AG04450 (cell line): ENCODE measurements at regions of chr2 and their contacts with region 1.

Region 1: DNA sequence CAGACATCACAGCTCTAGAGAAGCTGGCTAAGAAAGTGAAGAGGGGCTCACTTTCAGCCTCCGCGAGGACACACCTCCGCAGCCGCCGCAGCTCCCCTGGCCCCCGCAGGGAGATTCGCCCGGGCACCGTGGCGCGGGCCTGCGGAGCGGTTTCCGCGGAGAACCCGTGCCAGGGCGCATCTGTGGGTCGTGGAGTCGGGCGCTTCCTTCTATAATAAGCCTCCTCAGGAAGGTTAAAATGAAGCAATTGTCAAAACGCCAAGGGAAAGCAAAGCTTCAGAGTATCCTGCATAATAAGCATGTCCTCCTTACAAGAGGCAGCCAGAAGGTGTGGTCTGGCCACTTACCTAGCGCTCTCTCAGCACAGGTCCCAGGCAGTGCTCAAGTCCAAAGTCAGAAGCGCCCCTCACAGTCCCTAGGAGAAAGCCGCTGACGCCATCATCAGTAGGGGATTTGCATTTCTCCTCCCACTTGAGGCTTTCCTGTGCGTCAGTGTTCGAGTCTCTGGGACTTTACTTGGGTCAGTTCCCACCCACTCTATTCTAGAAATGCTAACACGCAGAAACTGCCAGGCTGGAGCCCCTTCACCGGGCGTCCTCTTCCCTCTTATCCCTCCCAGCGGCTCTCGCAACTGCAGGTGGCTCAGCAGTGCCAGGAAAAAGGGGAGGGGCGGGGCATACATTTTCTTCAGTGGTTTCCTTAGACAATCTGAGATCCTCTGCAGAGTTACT is at the start of gene STAT4:
- DNase-seq: no peak
- H3K4me3 ChIP-seq: peak within 1 kb of the TSS; percentile 58
- H3K27ac ChIP-seq: no peak within 1 kb of the TSS
- H3K27me3 ChIP-seq: no peaks in the 10 kb centered on the region
- CTCF ChIP-seq: no peak
- polyA plus RNA-seq, gene STAT4: 0.88 and 1.3 TPM in 2 replicates

Region 2: DNA sequence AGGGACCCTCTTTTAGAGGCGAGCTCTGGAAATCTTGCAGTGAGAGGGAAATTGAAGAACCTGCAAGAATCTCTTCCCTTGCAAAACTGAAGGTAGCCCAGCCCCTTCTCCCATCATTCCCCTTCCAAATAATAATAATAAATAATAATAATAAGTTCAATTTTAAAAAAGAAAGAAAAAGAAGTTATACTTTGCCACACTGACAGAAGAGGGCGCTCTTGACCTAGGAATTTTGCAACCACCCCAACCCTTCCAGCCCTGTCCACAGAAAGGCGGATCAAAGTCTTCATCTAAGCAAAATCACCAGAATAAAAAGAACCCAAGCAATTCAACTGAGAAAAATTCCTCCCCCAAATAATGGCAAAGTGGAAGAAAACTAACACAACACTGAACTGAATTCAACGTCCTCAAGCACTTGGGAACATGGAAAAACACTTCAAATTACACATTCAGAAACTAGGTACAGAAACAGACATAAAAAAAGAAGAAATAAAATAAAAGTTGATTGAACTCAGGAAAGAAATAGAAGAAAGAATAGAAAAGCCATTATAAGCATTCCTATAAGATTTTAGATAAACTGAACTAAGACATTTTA is 369.1 kb before region 1 on chr2:
- CTCF ChIA-PET with region 1: interaction called, 12 read pairs
- POLR2A ChIA-PET with region 1: no interaction called
- DNase-seq: peak; percentile 47
- H3K4me3 ChIP-seq: no peak overlapping the region
- H3K27ac ChIP-seq: no peak overlapping the region
- H3K27me3 ChIP-seq: peaks cover 9% of the 10 kb centered on the region
- CTCF ChIP-seq: peak; percentile 59

Region 3: GRCh38 chr2:191066197-191066918 is 84.4 kb before region 1 on chr2:
- CTCF ChIA-PET with region 1: interaction called, 25 read pairs
- POLR2A ChIA-PET with region 1: no interaction called
- DNase-seq: no peak
- H3K4me3 ChIP-seq: no peak overlapping the region
- H3K27ac ChIP-seq: no peak overlapping the region
- H3K27me3 ChIP-seq: no peaks in the 10 kb centered on the region
- CTCF ChIP-seq: no peak

Region 4: GRCh38 chr2:191165176-191165643 is 14.4 kb after region 1 on chr2:
- CTCF ChIA-PET with region 1: interaction called, 28 read pairs
- POLR2A ChIA-PET with region 1: no interaction called
- DNase-seq: no peak
- H3K4me3 ChIP-seq: no peak overlapping the region
- H3K27ac ChIP-seq: no peak overlapping the region
- H3K27me3 ChIP-seq: no peaks in the 10 kb centered on the region
- CTCF ChIP-seq: peak; percentile 81

Region 5: GRCh38 chr2:191171708-191172355 is 21.1 kb after region 1 on chr2:
- CTCF ChIA-PET with region 1: interaction called, 28 read pairs
- POLR2A ChIA-PET with region 1: no interaction called
- DNase-seq: peak; percentile 81
- H3K4me3 ChIP-seq: no peak overlapping the region
- H3K27ac ChIP-seq: peak overlapping the region; percentile 81
- H3K27me3 ChIP-seq: no peaks in the 10 kb centered on the region
- CTCF ChIP-seq: no peak

Region 6: DNA sequence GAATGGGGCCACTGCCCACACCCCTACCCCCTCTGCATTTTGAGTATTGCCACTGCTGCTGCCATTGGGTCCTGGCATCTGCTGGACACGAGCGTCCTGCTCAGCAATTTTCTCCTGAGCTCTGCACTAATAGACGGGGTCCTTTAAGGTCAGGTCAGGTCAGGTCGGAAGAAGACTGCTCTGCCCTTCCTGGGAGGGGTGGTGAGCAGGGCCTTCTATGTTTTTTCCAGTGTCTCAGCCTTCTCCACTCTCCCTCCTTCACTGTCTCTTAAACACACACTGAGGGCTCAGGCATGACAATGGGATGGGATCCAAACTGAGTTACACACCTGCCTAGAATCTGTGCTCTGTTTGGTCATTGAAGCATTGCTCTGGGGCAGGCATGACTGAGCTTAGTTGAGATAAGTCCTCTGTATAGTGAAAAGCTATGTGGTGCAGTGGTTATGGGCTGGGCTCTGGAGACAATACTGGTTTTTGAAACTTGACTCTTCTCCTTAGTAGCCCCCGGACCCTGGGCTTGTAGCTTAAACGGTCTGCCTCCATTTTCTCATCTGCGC is 105.1 kb after region 1 on chr2:
- CTCF ChIA-PET with region 1: no interaction called
- POLR2A ChIA-PET with region 1: no interaction called
- DNase-seq: no peak
- H3K4me3 ChIP-seq: no peak overlapping the region
- H3K27ac ChIP-seq: no peak overlapping the region
- H3K27me3 ChIP-seq: no peaks in the 10 kb centered on the region
- CTCF ChIP-seq: no peak

Region 7: DNA sequence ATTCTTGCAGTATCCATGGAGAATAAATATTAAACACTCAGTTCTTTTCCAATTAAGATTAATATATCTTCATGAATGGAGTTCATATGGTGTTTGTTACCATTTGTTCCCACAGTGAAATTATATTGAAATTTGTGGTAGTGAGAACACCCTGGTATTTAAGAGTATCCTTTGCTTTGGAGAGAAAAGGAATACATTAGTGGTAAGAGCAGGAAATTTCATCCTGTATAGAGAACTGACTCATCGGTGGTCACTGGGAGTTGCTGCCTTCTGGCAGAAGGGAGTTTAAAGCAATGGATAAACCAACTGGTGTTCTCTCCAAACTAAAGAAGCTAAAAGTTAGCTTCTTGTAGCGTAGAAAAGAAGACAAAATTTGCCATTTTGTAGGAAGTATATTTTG is 201.8 kb after region 1 on chr2:
- CTCF ChIA-PET with region 1: no interaction called
- POLR2A ChIA-PET with region 1: no interaction called
- DNase-seq: peak; percentile 37
- H3K4me3 ChIP-seq: no peak overlapping the region
- H3K27ac ChIP-seq: no peak overlapping the region
- H3K27me3 ChIP-seq: no peaks in the 10 kb centered on the region
- CTCF ChIP-seq: no peak

Region 8: GRCh38 chr2:191521608-191522208 is 370.9 kb after region 1 on chr2:
- CTCF ChIA-PET with region 1: interaction called, 31 read pairs
- POLR2A ChIA-PET with region 1: no interaction called
- DNase-seq: no peak
- H3K4me3 ChIP-seq: no peak overlapping the region
- H3K27ac ChIP-seq: no peak overlapping the region
- H3K27me3 ChIP-seq: no peaks in the 10 kb centered on the region
- CTCF ChIP-seq: peak; percentile 79

Region 9: GRCh38 chr2:191539068-191539467 is 388.3 kb after region 1 on chr2:
- CTCF ChIA-PET with region 1: interaction called, 11 read pairs
- POLR2A ChIA-PET with region 1: no interaction called
- DNase-seq: no peak
- H3K4me3 ChIP-seq: no peak overlapping the region
- H3K27ac ChIP-seq: no peak overlapping the region
- H3K27me3 ChIP-seq: peaks cover 4% of the 10 kb centered on the region
- CTCF ChIP-seq: peak; percentile 76

Region 10: GRCh38 chr2:191728750-191729624 is 578.2 kb after region 1 on chr2:
- CTCF ChIA-PET with region 1: no interaction called
- POLR2A ChIA-PET with region 1: no interaction called
- DNase-seq: no peak
- H3K4me3 ChIP-seq: no peak overlapping the region
- H3K27ac ChIP-seq: no peak overlapping the region
- H3K27me3 ChIP-seq: peaks cover 3% of the 10 kb centered on the region
- CTCF ChIP-seq: no peak